ENCODE measurements at regions of chr11 and their contacts with region 1.

Region 1: DNA sequence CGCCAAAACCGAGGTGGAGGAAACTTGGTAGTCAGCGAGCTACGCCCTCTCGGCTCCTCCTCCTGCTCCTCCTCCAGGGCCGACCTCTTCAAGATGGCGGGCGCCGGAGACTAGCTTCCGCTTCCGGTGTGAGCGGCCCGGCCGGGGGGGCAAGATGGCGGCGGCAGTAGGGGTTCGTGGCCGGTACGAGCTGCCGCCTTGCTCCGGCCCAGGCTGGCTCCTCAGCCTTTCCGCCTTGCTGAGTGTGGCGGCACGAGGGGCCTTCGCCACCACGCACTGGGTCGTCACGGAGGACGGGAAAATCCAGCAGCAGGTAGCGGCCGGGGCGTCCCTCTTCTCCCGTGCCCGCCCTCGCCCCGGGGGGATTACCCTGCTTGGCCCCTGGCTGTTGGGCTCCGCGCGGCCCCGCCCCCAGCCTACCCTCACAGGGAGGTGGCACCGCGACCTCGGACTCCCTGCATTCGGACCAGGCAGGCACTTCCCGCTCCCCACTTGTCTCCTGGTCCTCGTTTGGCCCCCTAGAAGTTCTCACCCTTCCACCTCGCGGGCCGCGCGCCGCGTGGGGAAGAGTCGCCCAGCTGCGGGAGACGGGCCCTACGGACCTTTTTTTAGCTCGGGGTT is at the start of gene TTC17:
- DNase-seq: peak; percentile 83 to 94 (median 90)
- ATAC-seq: peak; percentile 98
- H3K4me3 ChIP-seq: peak within 1 kb of the TSS; percentile 57
- H3K4me3 Mint-ChIP-seq: peak within 1 kb of the TSS; percentile 95 to 100 (median 98)
- H3K27ac ChIP-seq: peak within 1 kb of the TSS; percentile 88
- H3K27ac Mint-ChIP-seq: peak within 1 kb of the TSS; percentile 92 to 99 (median 98)
- H3K4me1 ChIP-seq: peaks cover 24 to 27% of the 10 kb centered on the region in 2 donors
- H3K4me1 Mint-ChIP-seq: peaks cover 24 to 60% (median 54%) of the 10 kb centered on the region in 7 donors
- H3K27me3 ChIP-seq: no peaks in the 10 kb centered on the region
- H3K27me3 Mint-ChIP-seq: no peaks in the 10 kb centered on the region
- total RNA-seq, gene TTC17: 85.2 to 132 (median 102) TPM

Region 2: GRCh38 chr11:43376594-43376993 is 17.7 kb after region 1 on chr11:
- CTCF ChIA-PET with region 1: no interaction called
- POLR2A ChIA-PET with region 1: interaction called, 13 read pairs
- intact Hi-C with region 1: no loop called
- DNase-seq: no peak
- ATAC-seq: no peak
- H3K4me3 ChIP-seq: no peak overlapping the region
- H3K4me3 Mint-ChIP-seq: no peak overlapping the region
- H3K27ac ChIP-seq: no peak overlapping the region
- H3K27ac Mint-ChIP-seq: no peak overlapping the region
- H3K4me1 ChIP-seq: no peaks in the 10 kb centered on the region
- H3K4me1 Mint-ChIP-seq: peaks cover 7 to 37% (median 28%) of the 10 kb centered on the region in 7 donors
- H3K27me3 ChIP-seq: no peaks in the 10 kb centered on the region
- H3K27me3 Mint-ChIP-seq: no peaks in the 10 kb centered on the region

Region 3: GRCh38 chr11:43419460-43419859 is 60.5 kb after region 1 on chr11:
- CTCF ChIA-PET with region 1: no interaction called
- POLR2A ChIA-PET with region 1: no interaction called
- intact Hi-C with region 1: loop called in 1 of 2 experiments (anchors 1 kb)
- DNase-seq: peak in 6 of 9 donors; percentile 1 to 23 (median 8)
- ATAC-seq: no peak
- H3K4me3 ChIP-seq: no peak overlapping the region
- H3K4me3 Mint-ChIP-seq: no peak overlapping the region
- H3K27ac ChIP-seq: no peak overlapping the region
- H3K27ac Mint-ChIP-seq: no peak overlapping the region
- H3K4me1 ChIP-seq: no peaks in the 10 kb centered on the region
- H3K4me1 Mint-ChIP-seq: peaks cover 0 to 3% (median 0%) of the 10 kb centered on the region in 7 donors
- H3K27me3 ChIP-seq: no peaks in the 10 kb centered on the region
- H3K27me3 Mint-ChIP-seq: no peaks in the 10 kb centered on the region

Region 4: GRCh38 chr11:43680521-43681400 is 321.9 kb after region 1 on chr11 and contains the start of gene HSD17B12:
- CTCF ChIA-PET with region 1: no interaction called
- POLR2A ChIA-PET with region 1: interaction called, 3 read pairs
- intact Hi-C with region 1: loop called (anchors 1 kb)
- DNase-seq: peak; percentile 91 to 100 (median 99)
- ATAC-seq: peak; percentile 99
- H3K4me3 ChIP-seq: peak within 1 kb of the TSS; percentile 81
- H3K4me3 Mint-ChIP-seq: peak within 1 kb of the TSS; percentile 85 to 99 (median 96)
- H3K27ac ChIP-seq: peak within 1 kb of the TSS; percentile 89
- H3K27ac Mint-ChIP-seq: peak within 1 kb of the TSS; percentile 84 to 98 (median 97)
- H3K4me1 ChIP-seq: peaks cover 4 to 8% of the 10 kb centered on the region in 2 donors
- H3K4me1 Mint-ChIP-seq: peaks cover 11 to 59% (median 43%) of the 10 kb centered on the region in 7 donors
- H3K27me3 ChIP-seq: no peaks in the 10 kb centered on the region
- H3K27me3 Mint-ChIP-seq: peaks cover 0 to 14% (median 2%) of the 10 kb centered on the region in 5 donors
- total RNA-seq, gene HSD17B12: 21.1 to 39.5 (median 24.7) TPM

Region 5: GRCh38 chr11:44065841-44066731 is 707.2 kb after region 1 on chr11 and contains the start of gene ACCS:
- CTCF ChIA-PET with region 1: no interaction called
- POLR2A ChIA-PET with region 1: no interaction called
- intact Hi-C with region 1: loop called (anchors 1 to 5 kb)
- DNase-seq: peak; percentile 80 to 91 (median 88)
- ATAC-seq: peak; percentile 98
- H3K4me3 ChIP-seq: peak within 1 kb of the TSS; percentile 88
- H3K4me3 Mint-ChIP-seq: peak within 1 kb of the TSS; percentile 79 to 97 (median 94)
- H3K27ac ChIP-seq: peak within 1 kb of the TSS; percentile 87
- H3K27ac Mint-ChIP-seq: peak within 1 kb of the TSS; percentile 84 to 97 (median 94)
- H3K4me1 ChIP-seq: peaks cover 6 to 12% of the 10 kb centered on the region in 2 donors
- H3K4me1 Mint-ChIP-seq: peaks cover 12 to 53% (median 26%) of the 10 kb centered on the region in 7 donors
- H3K27me3 ChIP-seq: no peaks in the 10 kb centered on the region
- H3K27me3 Mint-ChIP-seq: no peaks in the 10 kb centered on the region
- total RNA-seq, gene ACCS: 25.1 to 79.2 (median 57.6) TPM

Region 6: DNA sequence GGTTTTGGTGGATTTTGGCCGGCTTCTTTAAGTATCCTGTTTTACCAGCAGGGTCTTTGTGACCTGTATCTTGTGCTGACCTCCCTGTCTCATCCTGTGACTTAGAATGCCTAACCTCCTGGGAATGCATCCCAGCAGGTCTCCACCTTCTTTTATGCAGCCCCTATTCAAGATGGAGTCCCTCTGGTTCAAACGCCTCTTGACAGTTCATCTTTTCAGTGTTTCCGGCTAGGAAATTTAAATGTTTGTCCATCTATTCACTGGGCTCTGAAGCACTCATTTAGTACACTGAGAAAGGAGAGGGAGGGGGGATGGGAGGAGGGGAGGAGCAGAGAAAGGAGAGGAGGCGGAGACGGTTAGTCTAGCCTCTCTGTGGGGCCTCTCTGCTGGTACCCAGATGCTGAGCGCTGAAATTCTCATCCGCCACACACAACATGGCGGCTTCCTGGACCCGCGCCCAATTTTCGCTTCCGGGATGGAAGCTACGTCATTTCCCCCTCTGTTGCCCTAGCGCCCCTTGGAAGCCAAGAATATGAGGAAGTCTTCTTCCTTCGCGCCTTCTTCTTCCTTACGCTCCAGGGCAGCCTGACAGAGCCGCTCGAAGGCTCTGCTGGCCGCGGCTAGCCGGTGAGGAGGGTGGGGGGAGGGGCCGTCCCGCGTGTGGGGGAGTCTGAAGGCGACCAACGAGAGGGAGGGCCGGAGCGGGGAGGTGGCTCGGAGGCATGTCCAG is 1996.2 kb after region 1 on chr11:
- CTCF ChIA-PET with region 1: no interaction called
- POLR2A ChIA-PET with region 1: no interaction called
- intact Hi-C with region 1: loop called in 1 of 2 experiments (anchors 2 kb)
- DNase-seq: peak; percentile 77 to 91 (median 88)
- ATAC-seq: peak; percentile 96
- H3K4me3 ChIP-seq: peak overlapping the region; percentile 93
- H3K4me3 Mint-ChIP-seq: peak overlapping the region; percentile 75 to 87 (median 82)
- H3K27ac ChIP-seq: peak overlapping the region; percentile 73
- H3K27ac Mint-ChIP-seq: peak overlapping the region; percentile 70 to 91 (median 83)
- H3K4me1 ChIP-seq: peaks cover 0 to 5% of the 10 kb centered on the region in 2 donors
- H3K4me1 Mint-ChIP-seq: peaks cover 9 to 31% (median 26%) of the 10 kb centered on the region in 7 donors
- H3K27me3 ChIP-seq: no peaks in the 10 kb centered on the region
- H3K27me3 Mint-ChIP-seq: peaks cover 0 to 28% (median 7%) of the 10 kb centered on the region in 5 donors